Activated CD4-positive, alpha-beta T cell treated with anti-CD3 and anti-CD28 coated beads for 36 hours (primary cell): ENCODE measurements at regions of chr3 and their contacts with region 1.

Region 1: GRCh38 chr3:111717601-111718000 is 122.5 kb upstream of the ZBED2 start:
- DNase-seq: peak; percentile 82
- ATAC-seq: peak; percentile 96
- H3K4me3 Mint-ChIP-seq: no peak overlapping the region
- H3K27ac Mint-ChIP-seq: no peak overlapping the region
- H3K4me1 Mint-ChIP-seq: peaks cover 4% of the 10 kb centered on the region
- H3K27me3 Mint-ChIP-seq: no peaks in the 10 kb centered on the region

Region 2: GRCh38 chr3:111465081-111465670 is 252.4 kb before region 1 on chr3:
- CTCF ChIA-PET with region 1: no interaction called
- POLR2A ChIA-PET with region 1: no interaction called
- intact Hi-C with region 1: no loop called
- DNase-seq: no peak
- ATAC-seq: no peak
- H3K4me3 Mint-ChIP-seq: no peak overlapping the region
- H3K27ac Mint-ChIP-seq: no peak overlapping the region
- H3K4me1 Mint-ChIP-seq: peaks cover 4% of the 10 kb centered on the region
- H3K27me3 Mint-ChIP-seq: no peaks in the 10 kb centered on the region

Region 3: GRCh38 chr3:111691293-111691909 is 26.2 kb before region 1 on chr3:
- CTCF ChIA-PET with region 1: interaction called, 22 read pairs
- POLR2A ChIA-PET with region 1: no interaction called
- intact Hi-C with region 1: no loop called
- DNase-seq: no peak
- ATAC-seq: no peak
- H3K4me3 Mint-ChIP-seq: no peak overlapping the region
- H3K27ac Mint-ChIP-seq: no peak overlapping the region
- H3K4me1 Mint-ChIP-seq: peaks cover 46% of the 10 kb centered on the region
- H3K27me3 Mint-ChIP-seq: no peaks in the 10 kb centered on the region

Region 4: GRCh38 chr3:111967651-111968274 is 250.2 kb after region 1 on chr3:
- CTCF ChIA-PET with region 1: interaction called, 181 read pairs
- POLR2A ChIA-PET with region 1: no interaction called
- intact Hi-C with region 1: loop called (anchors 1 kb)
- DNase-seq: peak; percentile 90
- ATAC-seq: peak; percentile 85
- H3K4me3 Mint-ChIP-seq: no peak overlapping the region
- H3K27ac Mint-ChIP-seq: no peak overlapping the region
- H3K4me1 Mint-ChIP-seq: peaks cover 28% of the 10 kb centered on the region
- H3K27me3 Mint-ChIP-seq: no peaks in the 10 kb centered on the region

Region 5: DNA sequence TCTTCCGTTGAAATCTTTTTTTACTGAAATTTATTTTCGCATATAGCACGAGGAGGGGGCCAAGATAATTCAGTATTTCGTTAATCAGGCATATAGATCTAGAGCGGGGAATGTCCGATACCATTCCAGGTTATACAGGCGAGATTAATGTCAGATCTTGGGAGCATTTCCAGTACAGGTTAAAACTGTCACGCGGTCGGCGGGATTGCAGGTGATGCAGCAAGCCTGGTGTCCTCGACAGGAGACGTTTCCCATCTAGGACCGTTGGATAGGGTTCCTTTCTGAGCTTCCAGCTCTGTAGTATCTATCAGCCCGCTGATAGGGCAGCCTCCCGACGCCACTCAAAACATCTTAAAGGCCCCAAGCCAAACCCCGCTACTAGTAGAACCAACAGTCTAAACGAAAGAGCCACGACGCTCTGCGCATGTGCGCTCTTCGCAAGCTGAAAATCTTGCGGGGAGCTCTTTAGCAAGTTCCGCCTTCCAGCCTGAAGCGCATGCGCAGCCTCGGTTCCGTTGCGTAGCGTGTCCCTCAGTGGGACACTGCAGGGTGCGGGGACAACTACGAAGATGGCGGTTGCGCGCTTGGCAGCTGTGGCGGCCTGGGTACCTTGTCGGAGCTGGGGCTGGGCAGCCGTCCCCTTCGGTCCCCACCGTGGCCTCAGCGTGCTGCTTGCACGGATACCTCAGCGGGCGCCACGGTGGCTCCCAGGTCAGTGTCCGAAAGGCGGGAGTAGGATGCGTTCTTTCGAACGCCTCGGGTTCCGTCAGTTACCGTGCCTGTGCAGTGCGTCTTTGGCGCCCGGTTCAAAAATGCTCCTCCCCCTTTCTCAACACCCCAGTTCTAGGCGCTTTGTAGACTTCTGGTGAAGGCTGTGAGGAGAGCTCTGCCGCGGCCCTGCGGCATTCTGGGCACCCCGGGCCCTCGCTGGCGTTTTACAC is 261.2 kb after region 1 on chr3 and contains the start of gene ABHD10:
- CTCF ChIA-PET with region 1: interaction called, 40 read pairs
- POLR2A ChIA-PET with region 1: no interaction called
- intact Hi-C with region 1: no loop called
- DNase-seq: peak; percentile 98
- ATAC-seq: peak; percentile 97
- H3K4me3 Mint-ChIP-seq: peak within 1 kb of the TSS; percentile 87
- H3K27ac Mint-ChIP-seq: peak within 1 kb of the TSS; percentile 93
- H3K4me1 Mint-ChIP-seq: peaks cover 40% of the 10 kb centered on the region
- H3K27me3 Mint-ChIP-seq: no peaks in the 10 kb centered on the region
- total RNA-seq, gene ABHD10: 58.7 to 64.1 TPM

Region 6: GRCh38 chr3:112013058-112013783 is 295.6 kb after region 1 on chr3:
- CTCF ChIA-PET with region 1: interaction called, 59 read pairs
- POLR2A ChIA-PET with region 1: no interaction called
- intact Hi-C with region 1: loop called (anchors 1 kb)
- DNase-seq: peak; percentile 82
- ATAC-seq: peak; percentile 96
- H3K4me3 Mint-ChIP-seq: no peak overlapping the region
- H3K27ac Mint-ChIP-seq: peak overlapping the region; percentile 29
- H3K4me1 Mint-ChIP-seq: peaks cover 20% of the 10 kb centered on the region
- H3K27me3 Mint-ChIP-seq: no peaks in the 10 kb centered on the region